CD8-positive, alpha-beta T cell (primary cell): ENCODE measurements at regions of chr1 and their contacts with region 1.

Region 1: GRCh38 chr1:160291248-160292220 is 6.6 kb upstream of the PEX19 start:
- DNase-seq: peak; percentile 27 to 87 (median 66)
- ATAC-seq: peak; percentile 99
- H3K4me3 ChIP-seq: no peak overlapping the region
- H3K4me3 Mint-ChIP-seq: no peak overlapping the region
- H3K27ac ChIP-seq: no peak overlapping the region
- H3K27ac Mint-ChIP-seq: peak overlapping the region; percentile 23
- H3K4me1 ChIP-seq: peaks cover 4% of the 10 kb centered on the region
- H3K4me1 Mint-ChIP-seq: peaks cover 3% of the 10 kb centered on the region
- H3K27me3 ChIP-seq: no peaks in the 10 kb centered on the region
- H3K27me3 Mint-ChIP-seq: no peaks in the 10 kb centered on the region
- CTCF ChIP-seq: peak; percentile 78

Region 2: GRCh38 chr1:160085686-160086455 is 205.7 kb before region 1 on chr1:
- CTCF ChIA-PET with region 1: interaction called, 22 read pairs
- POLR2A ChIA-PET with region 1: no interaction called
- intact Hi-C with region 1: no loop called
- DNase-seq: peak; percentile 58 to 86 (median 81)
- ATAC-seq: peak; percentile 74
- H3K4me3 ChIP-seq: no peak overlapping the region
- H3K4me3 Mint-ChIP-seq: peak overlapping the region; percentile 32
- H3K27ac ChIP-seq: no peak overlapping the region
- H3K27ac Mint-ChIP-seq: peak overlapping the region; percentile 46
- H3K4me1 ChIP-seq: peaks cover 10% of the 10 kb centered on the region
- H3K4me1 Mint-ChIP-seq: peaks cover 20% of the 10 kb centered on the region
- H3K27me3 ChIP-seq: peaks cover 5 to 13% of the 10 kb centered on the region in 2 experiments
- H3K27me3 Mint-ChIP-seq: peaks cover 15% of the 10 kb centered on the region
- CTCF ChIP-seq: peak; percentile 81

Region 3: GRCh38 chr1:160193091-160193819 is 98.3 kb before region 1 on chr1:
- CTCF ChIA-PET with region 1: interaction called, 155 read pairs
- POLR2A ChIA-PET with region 1: no interaction called
- intact Hi-C with region 1: loop called in 1 of 2 experiments (anchors 1 kb)
- DNase-seq: peak; percentile 58 to 89 (median 81)
- ATAC-seq: peak; percentile 95
- H3K4me3 ChIP-seq: no peak overlapping the region
- H3K4me3 Mint-ChIP-seq: no peak overlapping the region
- H3K27ac ChIP-seq: no peak overlapping the region
- H3K27ac Mint-ChIP-seq: no peak overlapping the region
- H3K4me1 ChIP-seq: no peaks in the 10 kb centered on the region
- H3K4me1 Mint-ChIP-seq: no peaks in the 10 kb centered on the region
- H3K27me3 ChIP-seq: peaks cover 0 to 2% of the 10 kb centered on the region in 2 experiments
- H3K27me3 Mint-ChIP-seq: no peaks in the 10 kb centered on the region
- CTCF ChIP-seq: peak; percentile 83

Region 4: GRCh38 chr1:160219062-160219929 is 72.2 kb before region 1 on chr1:
- CTCF ChIA-PET with region 1: interaction called, 13 read pairs
- POLR2A ChIA-PET with region 1: no interaction called
- intact Hi-C with region 1: no loop called
- DNase-seq: peak in 1 of 9 experiments; percentile 24
- ATAC-seq: no peak
- H3K4me3 ChIP-seq: no peak overlapping the region
- H3K4me3 Mint-ChIP-seq: no peak overlapping the region
- H3K27ac ChIP-seq: no peak overlapping the region
- H3K27ac Mint-ChIP-seq: no peak overlapping the region
- H3K4me1 ChIP-seq: no peaks in the 10 kb centered on the region
- H3K4me1 Mint-ChIP-seq: no peaks in the 10 kb centered on the region
- H3K27me3 ChIP-seq: no peaks in the 10 kb centered on the region
- H3K27me3 Mint-ChIP-seq: no peaks in the 10 kb centered on the region
- CTCF ChIP-seq: no peak

Region 5: GRCh38 chr1:160244209-160244608 is 47.3 kb before region 1 on chr1:
- CTCF ChIA-PET with region 1: interaction called, 23 read pairs
- POLR2A ChIA-PET with region 1: no interaction called
- intact Hi-C with region 1: no loop called
- DNase-seq: no peak
- ATAC-seq: no peak
- H3K4me3 ChIP-seq: no peak overlapping the region
- H3K4me3 Mint-ChIP-seq: no peak overlapping the region
- H3K27ac ChIP-seq: no peak overlapping the region
- H3K27ac Mint-ChIP-seq: no peak overlapping the region
- H3K4me1 ChIP-seq: no peaks in the 10 kb centered on the region
- H3K4me1 Mint-ChIP-seq: peaks cover 28% of the 10 kb centered on the region
- H3K27me3 ChIP-seq: no peaks in the 10 kb centered on the region
- H3K27me3 Mint-ChIP-seq: no peaks in the 10 kb centered on the region
- CTCF ChIP-seq: no peak

Region 6: GRCh38 chr1:160261893-160262794 is 29.4 kb before region 1 on chr1 and contains the start of gene DCAF8:
- CTCF ChIA-PET with region 1: interaction called, 39 read pairs
- POLR2A ChIA-PET with region 1: interaction called, 4 read pairs
- intact Hi-C with region 1: loop called in 1 of 2 experiments (anchors 2 kb)
- DNase-seq: peak; percentile 97 to 99 (median 98)
- ATAC-seq: peak; percentile 87
- H3K4me3 ChIP-seq: peak within 1 kb of the TSS; percentile 91 to 99
- H3K4me3 Mint-ChIP-seq: peak within 1 kb of the TSS; percentile 96
- H3K27ac ChIP-seq: peak within 1 kb of the TSS; percentile 83 to 99
- H3K27ac Mint-ChIP-seq: peak within 1 kb of the TSS; percentile 98
- H3K4me1 ChIP-seq: peaks cover 31% of the 10 kb centered on the region
- H3K4me1 Mint-ChIP-seq: peaks cover 41% of the 10 kb centered on the region
- H3K27me3 ChIP-seq: no peaks in the 10 kb centered on the region
- H3K27me3 Mint-ChIP-seq: no peaks in the 10 kb centered on the region
- CTCF ChIP-seq: no peak
- total RNA-seq, gene DCAF8: 152 to 162 TPM

Region 7: GRCh38 chr1:160328184-160328583 is 36.6 kb after region 1 on chr1:
- CTCF ChIA-PET with region 1: interaction called, 16 read pairs
- POLR2A ChIA-PET with region 1: no interaction called
- intact Hi-C with region 1: no loop called
- DNase-seq: no peak
- ATAC-seq: no peak
- H3K4me3 ChIP-seq: no peak overlapping the region
- H3K4me3 Mint-ChIP-seq: no peak overlapping the region
- H3K27ac ChIP-seq: no peak overlapping the region
- H3K27ac Mint-ChIP-seq: no peak overlapping the region
- H3K4me1 ChIP-seq: no peaks in the 10 kb centered on the region
- H3K4me1 Mint-ChIP-seq: peaks cover 4% of the 10 kb centered on the region
- H3K27me3 ChIP-seq: no peaks in the 10 kb centered on the region
- H3K27me3 Mint-ChIP-seq: no peaks in the 10 kb centered on the region
- CTCF ChIP-seq: no peak